ENCODE measurements at regions of chr9 and their contacts with region 1.

Region 1: DNA sequence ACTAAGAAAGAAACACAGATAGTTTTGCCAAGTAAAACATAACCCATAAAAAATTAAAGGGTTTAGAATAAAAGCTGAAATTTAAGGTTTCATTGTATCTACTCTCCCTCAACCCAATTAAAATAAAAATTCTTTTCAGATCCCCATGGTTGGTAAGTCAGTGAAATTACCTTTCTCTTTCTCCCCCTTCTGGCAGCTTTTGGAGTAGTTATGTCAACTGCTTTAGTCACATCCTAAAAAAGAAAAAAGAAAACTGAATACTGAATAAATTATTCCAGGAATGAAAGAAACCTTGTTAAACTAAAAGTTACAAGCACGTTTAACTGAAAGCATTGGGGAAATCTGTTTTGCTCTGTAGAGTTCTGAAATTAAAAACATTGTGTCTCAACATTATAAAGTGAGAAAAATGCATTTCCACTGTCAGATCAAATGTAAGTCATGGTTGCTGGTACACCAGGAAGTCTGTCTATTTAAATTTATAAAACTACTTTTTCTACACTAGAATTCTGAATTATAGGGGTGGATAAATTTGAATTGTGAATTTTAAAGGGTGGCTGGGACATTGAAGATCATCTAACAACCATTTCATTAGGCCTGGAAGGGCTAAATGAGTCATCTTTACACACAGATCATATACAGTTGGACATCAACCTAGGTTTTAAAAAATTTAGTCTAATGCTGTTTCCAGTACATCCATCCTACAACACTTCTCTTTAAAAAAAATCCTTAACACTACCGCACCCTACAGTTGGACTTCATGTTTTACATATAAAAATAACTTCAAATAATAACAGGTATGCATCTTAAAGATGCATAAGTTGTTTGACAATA is 24.7 kb downstream of the PSIP1 start:
- DNase-seq: no peak
- ATAC-seq: peak; percentile 58
- H3K4me3 ChIP-seq: no peak overlapping the region
- H3K27ac ChIP-seq: no peak overlapping the region
- H3K4me1 ChIP-seq: no peaks in the 10 kb centered on the region
- H3K27me3 ChIP-seq: no peaks in the 10 kb centered on the region
- CTCF ChIP-seq: peak; percentile 31 to 46 (median 36); a peak in 5 of 6 replicates
- EP300 ChIP-seq: no peak
- POLR2A ChIP-seq: no peak
- RAD21 ChIP-seq: 0 out of 2 replicates have a peak, but pooled peaks have one; percentile 26

Region 2: GRCh38 chr9:15469406-15469805 is 16.6 kb before region 1 on chr9:
- CTCF ChIA-PET with region 1: interaction called, 3 read pairs
- POLR2A ChIA-PET with region 1: interaction called, 3 read pairs
- RAD21 ChIA-PET with region 1: no interaction called
- SMC1A ChIA-PET with region 1: interaction called, 11 read pairs
- in situ Hi-C with region 1: no loop called
- intact Hi-C with region 1: no loop called
- DNase-seq: no peak
- ATAC-seq: no peak
- H3K4me3 ChIP-seq: no peak overlapping the region
- H3K27ac ChIP-seq: no peak overlapping the region
- H3K4me1 ChIP-seq: no peaks in the 10 kb centered on the region
- H3K27me3 ChIP-seq: no peaks in the 10 kb centered on the region
- CTCF ChIP-seq: no peak
- EP300 ChIP-seq: no peak
- POLR2A ChIP-seq: no peak
- RAD21 ChIP-seq: no peak